ENCODE measurements at regions of chr20 and their contacts with region 1.

Region 1: DNA sequence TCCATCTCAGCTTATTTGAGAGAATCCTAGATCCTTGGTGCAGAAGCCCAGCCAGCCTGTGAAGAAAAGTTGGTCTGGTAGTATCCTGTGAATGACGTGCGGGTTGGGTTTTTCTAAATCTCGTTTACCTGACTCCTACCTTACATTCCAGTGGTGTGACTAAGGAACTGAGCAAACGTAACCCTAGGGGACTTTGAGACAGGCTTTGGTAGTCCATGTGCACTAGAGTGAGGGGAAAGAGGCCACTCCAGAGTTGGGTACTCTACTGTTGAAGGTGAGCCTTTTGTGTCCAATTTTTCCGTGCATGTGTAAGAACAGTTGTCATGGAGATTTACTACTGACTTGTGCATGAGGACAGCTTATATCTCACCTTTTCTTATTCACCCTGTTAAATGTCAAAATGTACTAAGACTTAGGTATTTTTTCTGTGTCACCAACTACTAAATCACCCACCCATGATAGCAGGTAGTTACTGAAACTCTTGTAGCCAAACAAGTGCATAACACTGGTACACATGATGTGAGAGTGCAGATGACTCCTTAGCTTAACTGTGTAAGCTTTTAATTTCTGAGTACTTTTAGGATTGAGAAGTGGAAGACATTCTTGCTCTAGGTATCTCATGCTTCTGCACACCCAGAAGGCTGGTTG is 26.3 kb upstream of the PLCG1 start:
- DNase-seq: peak; percentile 91
- ATAC-seq: peak; percentile 85
- H3K4me3 ChIP-seq: 0 out of 2 replicates have a peak overlapping the region, but pooled peaks have one; percentile 15
- H3K27ac ChIP-seq: peak overlapping the region; percentile 67
- H3K4me1 ChIP-seq: peaks cover 21% of the 10 kb centered on the region
- H3K27me3 ChIP-seq: no peaks in the 10 kb centered on the region
- CTCF ChIP-seq: no peak

Region 2: GRCh38 chr20:41064377-41064776 is 46.7 kb before region 1 on chr20:
- CTCF ChIA-PET with region 1: no interaction called
- POLR2A ChIA-PET with region 1: interaction called, 12 read pairs
- intact Hi-C with region 1: no loop called
- DNase-seq: no peak
- ATAC-seq: no peak
- H3K4me3 ChIP-seq: no peak overlapping the region
- H3K27ac ChIP-seq: no peak overlapping the region
- H3K4me1 ChIP-seq: peaks cover 37% of the 10 kb centered on the region
- H3K27me3 ChIP-seq: no peaks in the 10 kb centered on the region
- CTCF ChIP-seq: no peak